Spleen (tissue), 13 donors: ENCODE measurements at regions of chr17 and their contacts with region 1.

Region 1: DNA sequence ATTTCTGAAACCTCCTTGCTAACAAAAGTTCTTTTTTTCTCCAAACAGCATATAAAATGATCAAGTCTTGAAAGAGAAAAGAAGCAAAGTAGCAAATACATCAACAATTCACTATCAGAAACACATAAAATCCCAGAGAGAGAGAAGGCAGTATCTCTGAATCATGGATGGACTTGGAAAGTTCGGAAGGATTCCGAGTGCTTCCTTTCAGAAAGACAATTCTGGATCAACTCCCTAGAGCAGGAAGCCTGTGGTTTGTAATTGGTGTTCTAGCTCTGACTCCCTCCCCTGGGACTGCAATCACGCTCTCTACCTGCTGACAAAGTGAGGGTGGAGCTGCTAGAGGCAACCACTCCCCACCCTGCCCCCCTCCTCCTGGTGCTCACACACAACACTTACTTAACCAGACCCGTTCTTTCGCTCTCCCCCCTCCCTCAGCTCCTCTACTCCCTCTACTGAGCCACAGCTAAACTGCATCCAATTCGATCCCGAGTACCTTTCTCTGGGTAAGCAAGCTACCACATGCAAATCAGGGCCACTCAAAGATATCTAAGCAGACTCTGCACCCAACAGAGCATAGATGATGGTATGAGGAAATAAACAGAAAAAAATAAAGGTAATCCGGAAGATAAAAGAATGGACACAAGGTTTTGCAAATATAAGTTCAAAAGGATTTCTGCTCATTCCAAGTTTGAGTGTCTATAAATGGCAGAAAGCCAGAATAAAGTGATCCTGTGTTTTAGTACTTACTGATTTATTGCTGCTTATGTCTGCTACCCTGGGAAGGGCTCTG is at the start of gene RNF43:
- DNase-seq: peak; percentile 91
- H3K4me3 ChIP-seq: peak within 1 kb of the TSS in 2 of 8 donors; percentile 10 to 48
- H3K27ac ChIP-seq: peak within 1 kb of the TSS in 6 of 8 donors; percentile 6 to 62 (median 40)
- H3K4me1 ChIP-seq: peaks cover 0 to 19% (median 14%) of the 10 kb centered on the region in 6 donors
- H3K27me3 ChIP-seq: no peaks in the 10 kb centered on the region
- CTCF ChIP-seq: peak; percentile 31 to 95 (median 81)
- POLR2A ChIP-seq: no peak
- total RNA-seq, gene RNF43: 0.40 to 1.8 (median 1.0) TPM

Region 2: GRCh38 chr17:58317421-58318064 is 100.0 kb before region 1 on chr17:
- intact Hi-C with region 1: loop called (anchors 10 kb)
- DNase-seq: peak; percentile 85
- H3K4me3 ChIP-seq: no peak overlapping the region
- H3K27ac ChIP-seq: peak overlapping the region in 7 of 8 donors; percentile 33 to 79 (median 60)
- H3K4me1 ChIP-seq: peaks cover 0 to 19% (median 10%) of the 10 kb centered on the region in 6 donors
- H3K27me3 ChIP-seq: no peaks in the 10 kb centered on the region
- CTCF ChIP-seq: peak; percentile 63 to 86 (median 82)
- POLR2A ChIP-seq: no peak